ENCODE measurements at regions of chr1 and their contacts with region 1.

Region 1: GRCh38 chr1:39378377-39378776 is 113.1 kb upstream of the BMP8A start:
- DNase-seq: no peak
- ATAC-seq: no peak
- H3K4me3 ChIP-seq: no peak overlapping the region
- H3K27ac ChIP-seq: no peak overlapping the region
- H3K4me1 ChIP-seq: peaks cover 0 to 7% (median 0%) of the 10 kb centered on the region in 12 donors
- H3K27me3 ChIP-seq: no peaks in the 10 kb centered on the region
- CTCF ChIP-seq: peak in 6 of 12 donors; percentile 8 to 30 (median 13)
- POLR2A ChIP-seq: no peak

Region 2: GRCh38 chr1:39422614-39423013 is 44.2 kb after region 1 on chr1:
- intact Hi-C with region 1: loop called in 3 of 10 experiments (anchors 5 to 10 kb)
- DNase-seq: no peak
- ATAC-seq: no peak
- H3K4me3 ChIP-seq: no peak overlapping the region
- H3K27ac ChIP-seq: no peak overlapping the region
- H3K4me1 ChIP-seq: peaks cover 0 to 66% (median 23%) of the 10 kb centered on the region in 12 donors
- H3K27me3 ChIP-seq: no peaks in the 10 kb centered on the region
- CTCF ChIP-seq: no peak
- POLR2A ChIP-seq: no peak

Region 3: GRCh38 chr1:39485046-39485803 is 106.8 kb after region 1 on chr1:
- intact Hi-C with region 1: no loop called
- DNase-seq: peak in 4 of 5 donors; percentile 41 to 67 (median 50)
- ATAC-seq: peak; percentile 51 to 72 (median 60)
- H3K4me3 ChIP-seq: no peak overlapping the region
- H3K27ac ChIP-seq: peak overlapping the region in 9 of 12 donors; percentile 3 to 60 (median 31)
- H3K4me1 ChIP-seq: peaks cover 0 to 12% (median 0%) of the 10 kb centered on the region in 12 donors
- H3K27me3 ChIP-seq: peaks cover 0 to under 1% (median 0%) of the 10 kb centered on the region in 9 donors
- CTCF ChIP-seq: no peak
- POLR2A ChIP-seq: no peak

Measured in heart left ventricle (tissue), 16 donors.